Heart left ventricle (tissue), 16 donors: ENCODE measurements at regions of chr15 and their contacts with region 1.

Region 1: GRCh38 chr15:79863886-79864285 is 32.9 kb downstream of the MTHFS start:
- DNase-seq: no peak
- ATAC-seq: no peak
- H3K4me3 ChIP-seq: no peak overlapping the region
- H3K27ac ChIP-seq: no peak overlapping the region
- H3K4me1 ChIP-seq: no peaks in the 10 kb centered on the region
- H3K27me3 ChIP-seq: no peaks in the 10 kb centered on the region
- CTCF ChIP-seq: no peak
- POLR2A ChIP-seq: no peak

Region 2: DNA sequence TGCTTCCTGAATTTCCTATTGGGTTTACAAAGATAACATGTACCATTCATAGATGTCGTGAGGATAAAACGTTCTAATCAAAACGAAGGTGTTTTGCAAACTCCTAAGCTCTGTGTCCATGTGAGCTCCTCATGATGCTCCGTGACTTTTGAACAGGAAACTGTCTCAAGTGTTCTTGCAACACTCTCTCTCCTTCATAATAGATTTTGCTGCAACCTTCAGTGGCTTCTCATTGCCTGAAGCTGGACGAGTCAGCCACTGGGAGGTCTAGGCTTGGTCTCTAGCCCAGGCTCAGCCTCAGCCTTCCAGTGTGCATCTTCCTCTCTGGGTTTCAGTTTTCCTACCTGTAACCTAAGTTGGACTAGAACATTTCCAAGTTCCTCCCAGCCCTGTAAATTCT is 125.8 kb after region 1 on chr15:
- intact Hi-C with region 1: loop called in 2 of 10 experiments (anchors 10 kb)
- DNase-seq: no peak
- ATAC-seq: no peak
- H3K4me3 ChIP-seq: no peak overlapping the region
- H3K27ac ChIP-seq: no peak overlapping the region
- H3K4me1 ChIP-seq: peaks cover 0 to 15% (median 0%) of the 10 kb centered on the region in 12 donors
- H3K27me3 ChIP-seq: no peaks in the 10 kb centered on the region
- CTCF ChIP-seq: no peak
- POLR2A ChIP-seq: no peak